Heart right ventricle (tissue), 16 donors: ENCODE measurements at regions of chr2 and their contacts with region 1.

Region 1: DNA sequence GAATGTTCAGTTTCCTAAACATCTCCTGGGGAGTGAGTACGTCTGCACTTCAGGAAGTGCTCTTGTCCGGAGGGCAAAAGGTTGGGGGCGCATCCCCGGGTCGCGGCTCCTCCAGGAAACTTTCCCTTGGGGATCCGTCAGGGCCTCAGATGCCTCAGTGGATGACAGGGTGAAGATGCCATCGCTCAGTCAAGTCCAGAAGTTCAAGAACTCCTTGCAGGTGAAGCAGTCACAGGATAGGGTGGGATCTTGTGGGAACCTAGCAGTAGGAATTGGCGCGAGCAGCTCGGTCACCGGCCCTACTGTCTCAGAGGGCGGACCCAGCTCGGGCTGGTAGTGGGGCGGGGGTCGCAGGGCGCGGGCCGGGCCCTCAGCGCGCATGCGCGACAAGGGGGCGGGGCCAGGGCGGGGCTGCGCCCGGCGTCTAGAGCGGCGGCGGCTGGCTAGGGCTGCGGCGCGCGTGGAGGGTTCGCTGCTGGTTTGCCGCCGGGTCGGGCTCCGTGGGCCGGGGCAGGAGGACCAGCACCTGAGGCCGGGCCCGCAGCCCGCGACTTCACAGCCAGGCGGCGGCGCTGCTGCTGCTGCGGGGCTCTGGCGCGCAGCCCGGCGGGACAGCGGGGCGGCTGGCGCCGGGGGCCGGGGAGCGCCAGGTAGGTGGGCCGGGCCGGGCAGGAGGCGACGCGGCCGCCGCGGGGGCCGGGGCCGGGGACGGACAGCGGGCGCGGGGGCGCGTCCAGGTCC is at the start of gene INPP4A:
- DNase-seq: peak; percentile 75 to 85
- ATAC-seq: peak; percentile 90 to 97 (median 94)
- H3K4me3 ChIP-seq: peak within 1 kb of the TSS; percentile 55 to 94 (median 82)
- H3K27ac ChIP-seq: peak within 1 kb of the TSS; percentile 56 to 93 (median 81)
- H3K4me1 ChIP-seq: peaks cover 0 to 42% (median 19%) of the 10 kb centered on the region in 9 donors
- H3K27me3 ChIP-seq: no peaks in the 10 kb centered on the region
- CTCF ChIP-seq: peak in 5 of 9 donors; percentile 7 to 46 (median 32)
- total RNA-seq, gene INPP4A: 15.8 to 31.2 (median 22.0) TPM

Region 2: DNA sequence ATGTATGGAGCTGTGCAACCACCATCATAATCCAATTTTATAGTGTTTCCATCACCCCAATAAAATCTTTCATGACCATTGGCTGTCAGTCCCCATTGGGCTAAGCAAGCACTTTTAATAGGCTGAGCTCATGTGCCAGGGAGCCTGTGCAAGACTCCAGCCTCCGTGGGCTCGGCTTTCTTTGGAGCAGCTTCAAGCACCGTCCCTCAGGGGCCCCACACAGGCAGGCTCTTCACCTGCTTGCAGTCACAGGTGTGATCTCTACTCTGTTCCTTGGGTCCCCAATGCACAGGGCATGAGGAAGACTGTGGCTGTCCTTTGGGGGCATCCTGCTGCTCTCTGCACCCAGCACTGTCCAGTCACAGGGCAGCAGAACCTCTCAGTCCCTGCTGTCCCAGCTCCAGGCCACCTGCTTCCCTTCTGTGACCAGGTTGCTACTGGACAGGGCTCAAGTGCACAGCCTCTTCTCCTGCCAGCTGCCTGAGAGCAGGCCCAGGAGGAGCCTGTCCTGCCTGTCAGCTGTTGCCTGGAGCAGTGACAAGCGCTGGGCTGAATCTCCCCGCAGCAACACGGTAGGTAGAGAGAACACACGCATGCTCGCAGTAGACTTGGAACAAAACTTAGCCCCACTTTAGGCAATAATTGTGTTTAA is 408.1 kb before region 1 on chr2:
- intact Hi-C with region 1: no loop called
- DNase-seq: peak; percentile 55 to 57
- ATAC-seq: peak; percentile 62 to 95 (median 90)
- H3K4me3 ChIP-seq: no peak overlapping the region
- H3K27ac ChIP-seq: peak overlapping the region in 5 of 10 donors; percentile 3 to 28 (median 8)
- H3K4me1 ChIP-seq: peaks cover 0 to 28% (median 17%) of the 10 kb centered on the region in 9 donors
- H3K27me3 ChIP-seq: peaks cover 0 to 68% (median 0%) of the 10 kb centered on the region in 7 donors
- CTCF ChIP-seq: no peak

Region 3: DNA sequence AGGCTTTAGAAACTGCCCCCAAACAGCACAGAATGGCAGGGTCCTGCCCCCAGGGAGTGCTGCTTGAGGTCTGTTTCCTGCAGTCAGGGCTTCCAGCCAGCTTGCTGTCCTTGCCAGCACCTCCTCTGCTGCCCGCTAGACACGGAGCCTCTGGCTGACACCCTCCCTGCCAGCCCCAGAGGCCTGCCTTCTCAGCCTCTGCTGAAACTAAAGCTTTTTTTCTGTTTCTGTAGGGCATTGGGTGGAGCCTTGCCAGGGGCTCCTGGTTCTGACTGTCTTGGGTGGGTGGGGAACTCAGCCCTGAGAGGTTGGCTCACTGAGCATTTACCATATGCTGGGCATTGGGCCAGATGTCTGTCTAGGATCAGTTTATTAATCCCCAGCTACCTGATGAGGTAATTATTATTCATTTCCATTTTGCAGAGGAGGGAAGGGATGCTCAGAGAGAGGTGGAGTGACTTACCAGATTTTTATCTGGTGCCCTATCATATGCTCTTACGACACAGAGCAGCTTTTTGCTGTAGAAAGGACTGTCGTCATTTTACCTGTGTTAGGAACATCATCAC is 35.4 kb after region 1 on chr2:
- intact Hi-C with region 1: loop called in 2 of 10 experiments (anchors 5 kb)
- DNase-seq: peak; percentile 65 to 76
- ATAC-seq: peak; percentile 82 to 92 (median 86)
- H3K4me3 ChIP-seq: no peak overlapping the region
- H3K27ac ChIP-seq: peak overlapping the region in 6 of 10 donors; percentile 39 to 74 (median 58)
- H3K4me1 ChIP-seq: peaks cover 35 to 97% (median 74%) of the 10 kb centered on the region in 9 donors
- H3K27me3 ChIP-seq: no peaks in the 10 kb centered on the region
- CTCF ChIP-seq: peak in 1 of 9 donors; percentile 10

Region 4: DNA sequence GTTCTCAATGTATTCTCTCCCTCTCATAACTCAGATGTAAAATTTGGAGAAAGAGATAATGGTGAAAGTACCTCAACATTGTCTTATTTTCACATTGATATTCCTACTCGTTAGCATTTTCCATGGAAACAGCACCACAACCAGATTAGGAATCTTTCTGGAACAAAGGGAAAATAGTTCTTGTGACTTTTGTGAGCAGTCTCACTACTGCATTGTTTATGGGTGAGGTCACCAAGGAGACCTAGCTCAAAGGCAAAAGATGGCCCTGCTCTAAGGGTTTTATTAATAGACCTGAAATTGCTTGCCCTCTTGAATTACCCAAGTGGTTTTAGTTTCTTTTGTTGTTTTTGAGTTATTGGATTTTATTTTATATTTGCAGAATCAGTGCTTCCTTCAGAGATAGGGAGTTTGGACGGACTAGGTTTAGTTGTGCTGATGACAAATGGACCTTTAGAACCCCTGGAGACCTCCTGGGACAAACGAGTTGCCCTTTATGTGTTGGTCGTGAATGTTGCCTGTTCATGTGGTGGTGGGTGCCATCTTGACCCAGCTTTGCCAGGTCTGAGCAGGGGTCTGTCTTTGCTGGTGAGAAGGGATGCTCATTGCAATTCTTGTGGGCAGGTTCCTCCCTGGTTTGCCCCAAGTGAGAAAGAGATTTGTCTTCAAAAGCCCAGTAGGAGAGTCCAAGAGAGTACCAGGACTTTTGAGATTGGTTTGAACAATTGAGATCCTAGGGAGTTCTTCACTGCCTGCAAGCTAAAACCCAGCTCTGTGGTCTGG is 58.1 kb after region 1 on chr2:
- intact Hi-C with region 1: loop called in 2 of 10 experiments (anchors 5 to 10 kb)
- DNase-seq: no peak
- ATAC-seq: peak in 4 of 8 donors; percentile 34 to 48 (median 40)
- H3K4me3 ChIP-seq: no peak overlapping the region
- H3K27ac ChIP-seq: peak overlapping the region in 1 of 10 donors; percentile 37
- H3K4me1 ChIP-seq: peaks cover 21 to 84% (median 70%) of the 10 kb centered on the region in 9 donors
- H3K27me3 ChIP-seq: no peaks in the 10 kb centered on the region
- CTCF ChIP-seq: no peak

Region 5: GRCh38 chr2:98518090-98518489 is 73.5 kb after region 1 on chr2:
- intact Hi-C with region 1: loop called in 1 of 10 experiments (anchors 10 kb)
- DNase-seq: peak; percentile 34 to 36
- ATAC-seq: peak in 7 of 8 donors; percentile 34 to 65 (median 53)
- H3K4me3 ChIP-seq: no peak overlapping the region
- H3K27ac ChIP-seq: peak overlapping the region in 1 of 10 donors; percentile 49
- H3K4me1 ChIP-seq: peaks cover 5 to 61% (median 18%) of the 10 kb centered on the region in 9 donors
- H3K27me3 ChIP-seq: no peaks in the 10 kb centered on the region
- CTCF ChIP-seq: peak in 8 of 9 donors; percentile 24 to 65 (median 55)

Region 6: GRCh38 chr2:98568881-98569793 is 124.5 kb after region 1 on chr2:
- intact Hi-C with region 1: loop called in 3 of 10 experiments (anchors 5 to 10 kb)
- DNase-seq: peak in 1 of 2 donors; percentile 56
- ATAC-seq: peak in 5 of 8 donors; percentile 13 to 50 (median 33)
- H3K4me3 ChIP-seq: no peak overlapping the region
- H3K27ac ChIP-seq: no peak overlapping the region
- H3K4me1 ChIP-seq: peaks cover 0 to 29% (median 21%) of the 10 kb centered on the region in 9 donors
- H3K27me3 ChIP-seq: no peaks in the 10 kb centered on the region
- CTCF ChIP-seq: peak; percentile 36 to 88 (median 82)